CD8-positive, alpha-beta memory T cell (primary cell): ENCODE measurements at regions of chr12 and their contacts with region 1.

Region 1: GRCh38 chr12:10197879-10198278 is 14.8 kb upstream of the GABARAPL1 start:
- DNase-seq: no peak
- H3K4me3 ChIP-seq: no peak overlapping the region
- H3K4me3 Mint-ChIP-seq: peak overlapping the region in 2 of 7 donors; percentile 8 to 53
- H3K27ac ChIP-seq: no peak overlapping the region
- H3K27ac Mint-ChIP-seq: peak overlapping the region in 4 of 8 donors; percentile 1 to 50 (median 28)
- H3K4me1 ChIP-seq: no peaks in the 10 kb centered on the region
- H3K4me1 Mint-ChIP-seq: peaks cover 8% of the 10 kb centered on the region in 3 donors
- H3K27me3 ChIP-seq: no peaks in the 10 kb centered on the region
- H3K27me3 Mint-ChIP-seq: peaks cover 12 to 16% of the 10 kb centered on the region in 2 donors

Region 2: GRCh38 chr12:10042167-10042566 is 155.7 kb before region 1 on chr12:
- CTCF ChIA-PET with region 1: no interaction called
- POLR2A ChIA-PET with region 1: no interaction called
- DNase-seq: no peak
- H3K4me3 ChIP-seq: no peak overlapping the region
- H3K4me3 Mint-ChIP-seq: no peak overlapping the region
- H3K27ac ChIP-seq: no peak overlapping the region
- H3K27ac Mint-ChIP-seq: no peak overlapping the region
- H3K4me1 ChIP-seq: no peaks in the 10 kb centered on the region
- H3K4me1 Mint-ChIP-seq: no peaks in the 10 kb centered on the region
- H3K27me3 ChIP-seq: no peaks in the 10 kb centered on the region
- H3K27me3 Mint-ChIP-seq: peaks cover 17 to 66% of the 10 kb centered on the region in 2 donors

Region 3: GRCh38 chr12:10175846-10176636 is 21.8 kb before region 1 on chr12:
- CTCF ChIA-PET with region 1: no interaction called
- POLR2A ChIA-PET with region 1: no interaction called
- DNase-seq: no peak
- H3K4me3 ChIP-seq: no peak overlapping the region
- H3K4me3 Mint-ChIP-seq: no peak overlapping the region
- H3K27ac ChIP-seq: no peak overlapping the region
- H3K27ac Mint-ChIP-seq: no peak overlapping the region
- H3K4me1 ChIP-seq: no peaks in the 10 kb centered on the region
- H3K4me1 Mint-ChIP-seq: no peaks in the 10 kb centered on the region
- H3K27me3 ChIP-seq: no peaks in the 10 kb centered on the region
- H3K27me3 Mint-ChIP-seq: peaks cover 20 to 51% of the 10 kb centered on the region in 2 donors

Region 4: GRCh38 chr12:10982244-10982643 is 784.4 kb after region 1 on chr12:
- CTCF ChIA-PET with region 1: no interaction called
- POLR2A ChIA-PET with region 1: interaction called, 10 read pairs
- DNase-seq: peak; percentile 1 to 86 (median 76)
- H3K4me3 ChIP-seq: no peak overlapping the region
- H3K4me3 Mint-ChIP-seq: peak overlapping the region; percentile 13 to 45 (median 37)
- H3K27ac ChIP-seq: no peak overlapping the region
- H3K27ac Mint-ChIP-seq: peak overlapping the region in 2 of 8 donors; percentile 12 to 21
- H3K4me1 ChIP-seq: peaks cover 22% of the 10 kb centered on the region
- H3K4me1 Mint-ChIP-seq: peaks cover 35 to 57% (median 38%) of the 10 kb centered on the region in 3 donors
- H3K27me3 ChIP-seq: peaks cover 4% of the 10 kb centered on the region
- H3K27me3 Mint-ChIP-seq: peaks cover 7 to 24% of the 10 kb centered on the region in 2 donors